ENCODE measurements at regions of chr9 and their contacts with region 1.

Region 1: GRCh38 chr9:135910762-135911161 is 3.4 kb upstream of the CAMSAP1 start:
- DNase-seq: no peak
- ATAC-seq: no peak

Region 2: GRCh38 chr9:135864447-135865049 is 46.2 kb before region 1 on chr9:
- intact Hi-C with region 1: loop called (anchors 2 kb)
- DNase-seq: peak; percentile 85
- ATAC-seq: peak; percentile 46

Region 3: GRCh38 chr9:136578915-136579649 is 668.3 kb after region 1 on chr9:
- intact Hi-C with region 1: no loop called
- DNase-seq: no peak
- ATAC-seq: peak; percentile 31

Measured in sciatic nerve (tissue), 2 donors.